GM12878 (cell line): ENCODE measurements at regions of chr3 and their contacts with region 1.

Region 1: DNA sequence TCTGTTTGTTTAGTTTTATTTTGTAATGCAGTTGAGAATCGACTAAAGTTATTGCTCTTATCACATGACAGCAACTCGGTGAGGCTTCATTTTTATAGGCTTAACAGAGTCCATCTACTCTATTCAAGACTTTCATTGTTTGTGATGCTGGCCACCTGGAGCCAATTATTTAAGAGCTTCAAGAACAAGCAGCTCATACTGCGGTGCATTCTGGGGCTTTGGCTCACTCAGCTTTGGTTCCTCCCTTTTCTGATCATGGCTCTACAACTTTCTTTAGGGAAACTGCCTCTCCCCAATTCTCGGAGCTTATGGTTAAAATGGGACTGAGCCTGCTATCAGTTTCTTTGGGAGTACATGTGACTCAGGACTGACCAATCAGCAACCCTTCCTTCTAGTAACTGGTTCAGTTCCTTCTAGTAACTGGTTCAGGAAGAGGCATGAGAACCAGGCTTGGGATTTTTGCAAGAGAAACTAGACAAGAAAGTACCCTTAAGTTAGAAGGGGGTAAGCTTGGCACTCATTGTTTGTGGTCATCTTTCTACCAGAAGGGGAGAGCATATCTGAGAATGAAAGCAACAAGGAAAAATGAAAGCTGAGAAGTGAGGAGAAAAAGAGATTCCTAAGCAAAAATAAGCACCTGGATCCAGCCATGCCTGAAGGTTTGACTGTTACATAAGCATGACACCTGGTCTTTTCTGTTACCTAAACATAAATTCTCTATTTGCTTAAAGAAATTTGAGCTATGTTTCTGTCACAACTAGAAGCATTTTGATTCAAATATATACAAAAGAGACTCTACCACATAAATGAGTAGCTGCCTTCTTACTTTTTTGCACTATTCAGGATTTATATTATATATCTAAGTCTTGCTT is 24.1 kb upstream of the ARHGEF3 start:
- DNase-seq: no peak
- ATAC-seq: peak; percentile 46
- H3K4me3 ChIP-seq: no peak overlapping the region
- H3K27ac ChIP-seq: no peak overlapping the region
- H3K4me1 ChIP-seq: peaks cover 6% of the 10 kb centered on the region
- H3K27me3 ChIP-seq: no peaks in the 10 kb centered on the region
- CTCF ChIP-seq: no peak
- EP300 ChIP-seq: no peak
- POLR2A ChIP-seq: no peak
- RAD21 ChIP-seq: no peak

Region 2: GRCh38 chr3:56610669-56611335 is 215.0 kb before region 1 on chr3:
- CTCF ChIA-PET with region 1: no interaction called
- POLR2A ChIA-PET with region 1: no interaction called
- RAD21 ChIA-PET with region 1: no interaction called
- SMC1A ChIA-PET with region 1: no interaction called
- in situ Hi-C with region 1: no loop called
- intact Hi-C with region 1: no loop called
- DNase-seq: no peak
- ATAC-seq: no peak
- H3K4me3 ChIP-seq: no peak overlapping the region
- H3K27ac ChIP-seq: no peak overlapping the region
- H3K4me1 ChIP-seq: no peaks in the 10 kb centered on the region
- H3K27me3 ChIP-seq: no peaks in the 10 kb centered on the region
- CTCF ChIP-seq: no peak
- EP300 ChIP-seq: no peak
- POLR2A ChIP-seq: no peak
- RAD21 ChIP-seq: no peak

Region 3: GRCh38 chr3:56812754-56813650 is 12.8 kb before region 1 on chr3:
- CTCF ChIA-PET with region 1: interaction called, 28 read pairs
- POLR2A ChIA-PET with region 1: interaction called, 4 read pairs
- RAD21 ChIA-PET with region 1: interaction called, 7 read pairs
- SMC1A ChIA-PET with region 1: interaction called, 39 read pairs
- in situ Hi-C with region 1: no loop called
- intact Hi-C with region 1: no loop called
- DNase-seq: no peak
- ATAC-seq: no peak
- H3K4me3 ChIP-seq: no peak overlapping the region
- H3K27ac ChIP-seq: no peak overlapping the region
- H3K4me1 ChIP-seq: no peaks in the 10 kb centered on the region
- H3K27me3 ChIP-seq: 0 out of 4 replicates have a peak, but pooled peaks cover 0 to 2% of the 10 kb centered on the region in 2 experiments
- CTCF ChIP-seq: no peak
- EP300 ChIP-seq: no peak
- POLR2A ChIP-seq: no peak
- RAD21 ChIP-seq: no peak